ENCODE measurements at regions of chr7 and their contacts with region 1.

Region 1: DNA sequence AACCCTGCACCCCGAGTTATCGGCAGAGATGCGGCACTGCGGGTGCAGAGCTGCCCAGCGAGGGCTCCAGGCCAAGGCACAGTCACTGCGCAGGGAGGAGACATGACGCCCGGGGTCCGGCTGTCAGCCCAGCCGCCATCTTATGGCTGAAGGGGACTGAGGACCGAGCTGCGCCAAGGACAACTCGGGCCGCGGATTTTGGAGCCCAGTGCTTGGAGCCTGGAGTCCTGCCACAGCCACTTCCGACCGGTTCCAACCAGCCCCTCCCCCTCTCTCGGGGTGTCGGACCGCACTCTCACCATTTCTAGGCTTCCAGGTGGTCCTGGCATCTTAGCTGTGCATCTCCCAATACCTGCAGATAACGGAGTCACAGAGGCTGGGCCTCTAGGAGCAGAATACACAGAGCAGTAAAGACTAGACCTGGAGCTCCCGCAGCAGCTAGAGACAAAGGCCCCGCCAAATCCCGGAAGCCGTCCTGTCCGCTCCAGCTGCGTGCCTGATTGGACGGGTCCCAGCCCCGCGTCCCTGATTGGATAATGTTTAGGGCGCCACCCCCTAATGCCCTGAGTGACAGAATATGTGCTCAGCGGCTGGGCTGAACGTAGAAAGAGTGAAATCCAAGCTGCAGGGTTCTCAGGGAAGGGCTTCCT is at the start of gene ZNF680:
- H3K4me3 ChIP-seq: peak within 1 kb of the TSS; percentile 89
- H3K27ac ChIP-seq: peak within 1 kb of the TSS; percentile 85
- H3K4me1 ChIP-seq: no peaks in the 10 kb centered on the region
- CTCF ChIP-seq: no peak

Region 2: DNA sequence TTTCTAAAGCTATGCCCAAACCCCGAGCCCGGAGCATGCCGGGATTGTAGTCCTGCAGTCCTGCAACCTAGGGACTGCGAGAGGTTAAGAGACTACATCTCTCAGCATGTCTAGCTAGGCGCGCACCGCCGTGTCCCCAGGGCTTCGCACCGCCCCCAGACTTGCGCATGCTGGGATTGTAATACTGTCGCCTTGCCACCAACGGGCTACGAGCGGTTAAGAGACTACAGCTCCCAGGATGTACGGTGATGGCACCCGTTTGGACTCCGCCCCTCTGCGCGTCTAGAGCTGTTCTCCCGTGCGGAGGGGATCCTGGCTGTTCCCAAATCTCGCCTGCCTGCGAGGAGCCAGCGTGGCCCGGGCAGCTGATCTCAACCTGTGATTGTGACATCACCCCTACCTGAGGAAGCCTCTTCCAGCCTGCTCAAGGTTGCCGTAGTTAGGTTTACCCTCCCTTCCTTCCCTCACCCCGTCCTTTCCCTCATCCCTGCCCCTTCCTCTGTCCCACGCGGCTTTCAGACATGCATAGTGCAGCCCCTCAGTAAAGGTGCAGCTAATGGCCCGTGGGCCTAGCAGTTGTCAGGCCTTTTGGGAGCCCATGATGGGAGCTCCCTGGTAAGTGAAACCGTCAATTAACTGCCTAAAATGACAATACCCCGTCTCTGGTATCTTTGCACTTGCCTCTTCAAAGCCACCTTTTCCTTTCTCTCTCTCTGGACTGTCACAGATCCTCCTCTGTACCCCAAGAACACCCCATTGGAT is 255.3 kb before region 1 on chr7:
- CTCF ChIA-PET with region 1: no interaction called
- POLR2A ChIA-PET with region 1: interaction called, 16 read pairs
- H3K4me3 ChIP-seq: peak overlapping the region; percentile 42
- H3K27ac ChIP-seq: no peak overlapping the region
- H3K4me1 ChIP-seq: no peaks in the 10 kb centered on the region
- CTCF ChIP-seq: no peak

Region 3: DNA sequence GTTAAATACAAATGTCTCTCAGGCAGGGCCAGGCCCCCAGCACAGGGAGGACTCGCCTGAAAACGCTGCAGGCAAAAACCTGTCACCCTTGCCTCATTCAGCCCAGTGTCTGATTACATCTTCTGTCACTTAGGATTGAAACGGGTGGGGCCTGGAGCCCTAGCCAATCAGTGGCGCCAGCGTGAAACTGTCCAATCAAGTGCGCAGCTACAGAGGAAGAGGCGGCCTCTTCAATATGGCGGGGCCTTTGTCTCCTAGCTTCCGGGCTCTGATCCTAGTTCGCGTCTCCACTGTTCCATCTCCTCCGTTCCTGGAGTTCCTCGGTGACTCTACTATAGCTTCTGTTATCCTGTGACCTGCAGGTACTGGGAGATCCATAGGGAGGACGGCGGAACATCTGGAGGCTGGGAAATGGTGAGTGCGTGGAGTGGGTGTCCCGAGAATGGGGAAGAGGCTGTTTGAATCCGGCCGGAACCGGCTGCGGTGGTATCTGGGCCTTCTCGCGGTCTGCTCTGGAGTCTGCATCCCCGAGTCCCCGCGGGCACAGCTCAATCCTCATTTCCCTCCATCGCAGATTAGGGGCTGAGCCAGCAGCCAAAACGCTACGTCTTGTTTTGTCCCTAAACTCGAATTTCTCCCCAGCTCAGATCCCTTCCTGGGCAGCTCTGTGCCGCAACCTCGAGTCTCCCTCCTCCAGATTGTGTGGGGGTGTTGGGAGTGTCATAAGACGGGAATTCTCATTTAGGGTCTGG is 248.8 kb before region 1 on chr7 and contains the start of gene ZNF736:
- CTCF ChIA-PET with region 1: no interaction called
- POLR2A ChIA-PET with region 1: interaction called, 16 read pairs
- H3K4me3 ChIP-seq: peak within 1 kb of the TSS; percentile 67
- H3K27ac ChIP-seq: peak within 1 kb of the TSS; percentile 72
- H3K4me1 ChIP-seq: no peaks in the 10 kb centered on the region
- CTCF ChIP-seq: no peak

Region 4: DNA sequence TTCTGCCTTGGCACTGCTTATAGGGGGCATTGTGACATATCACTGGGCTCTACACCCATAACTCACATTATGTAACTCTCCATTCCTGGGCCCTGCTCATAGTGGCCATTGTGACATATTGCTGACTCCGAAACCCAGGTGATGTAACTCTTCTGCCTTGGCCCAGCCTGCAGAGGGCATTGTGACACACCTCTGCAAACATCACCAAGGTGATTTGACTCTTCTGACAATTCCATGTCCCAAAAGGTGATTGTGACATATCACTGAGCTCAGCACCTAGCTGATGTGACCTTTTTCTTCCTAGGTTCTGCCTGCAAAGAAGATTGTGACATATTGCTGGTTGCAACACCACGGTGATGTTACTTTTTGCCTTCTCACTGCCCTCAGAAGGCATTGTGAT is 36.6 kb after region 1 on chr7:
- CTCF ChIA-PET with region 1: no interaction called
- POLR2A ChIA-PET with region 1: no interaction called
- H3K4me3 ChIP-seq: no peak overlapping the region
- H3K27ac ChIP-seq: no peak overlapping the region
- H3K4me1 ChIP-seq: no peaks in the 10 kb centered on the region
- CTCF ChIP-seq: no peak

Region 5: DNA sequence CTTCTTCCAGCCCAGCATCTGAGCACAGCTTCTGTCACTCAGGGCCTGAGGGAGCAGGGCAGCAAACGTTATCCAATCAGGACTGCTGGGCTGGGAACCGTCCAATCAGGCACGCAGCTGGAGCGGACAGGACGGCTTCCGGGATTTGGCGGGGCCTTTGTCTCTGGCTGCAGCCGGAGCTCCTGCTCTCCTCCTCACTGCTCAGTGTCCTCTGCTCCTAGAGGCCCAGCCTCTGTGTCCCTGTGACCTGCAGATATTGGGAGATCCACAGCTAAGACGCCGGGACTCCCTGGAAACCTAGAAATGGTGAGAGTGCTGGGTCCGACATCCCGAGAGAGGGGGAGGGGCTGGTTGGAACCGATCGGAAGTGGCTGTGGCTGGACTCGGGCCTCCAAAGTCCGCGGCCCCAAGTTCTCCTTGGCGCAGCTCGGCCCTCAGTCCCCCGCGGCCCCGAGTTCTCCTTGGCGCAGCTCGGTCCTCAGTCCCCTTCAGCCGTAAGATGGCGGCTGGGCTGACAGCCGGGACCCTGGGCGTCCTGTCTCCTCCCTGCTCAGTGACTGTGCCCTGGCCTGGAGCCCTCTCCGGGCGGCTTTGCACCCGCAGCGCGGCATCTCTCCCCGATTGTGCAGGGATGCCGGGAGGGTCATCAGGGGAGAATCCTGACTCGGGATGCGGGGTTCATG is 103.4 kb after region 1 on chr7 and contains the start of gene ZNF107:
- CTCF ChIA-PET with region 1: interaction called, 3 read pairs
- POLR2A ChIA-PET with region 1: interaction called, 13 read pairs
- H3K4me3 ChIP-seq: peak within 1 kb of the TSS; percentile 54
- H3K27ac ChIP-seq: peak within 1 kb of the TSS; percentile 75
- H3K4me1 ChIP-seq: peaks cover 3% of the 10 kb centered on the region; the same call in 1 of the 2 replicates
- CTCF ChIP-seq: no peak

Region 6: DNA sequence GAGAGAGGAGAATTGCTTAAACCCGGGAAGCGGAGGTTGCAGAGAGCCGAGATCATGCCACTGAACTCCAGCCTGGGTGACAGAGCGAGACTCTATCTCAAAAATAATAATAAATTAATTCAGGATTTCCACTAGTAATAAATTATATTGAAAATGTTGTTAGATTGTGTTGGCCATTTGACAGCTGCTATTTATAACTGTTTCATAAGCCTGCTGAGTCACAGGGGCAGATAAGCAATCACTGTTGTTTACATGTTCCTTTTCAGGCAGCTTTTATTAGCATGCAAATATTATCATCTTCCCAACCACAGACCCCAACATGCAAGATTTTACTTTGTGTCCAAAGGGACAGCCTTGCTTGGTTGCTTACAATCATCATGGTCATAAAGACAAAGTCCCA is 181.9 kb after region 1 on chr7:
- CTCF ChIA-PET with region 1: no interaction called
- POLR2A ChIA-PET with region 1: no interaction called
- H3K4me3 ChIP-seq: no peak overlapping the region
- H3K27ac ChIP-seq: no peak overlapping the region
- H3K4me1 ChIP-seq: no peaks in the 10 kb centered on the region
- CTCF ChIP-seq: no peak